ENCODE measurements at regions of chr4 and their contacts with region 1.

Region 1: DNA sequence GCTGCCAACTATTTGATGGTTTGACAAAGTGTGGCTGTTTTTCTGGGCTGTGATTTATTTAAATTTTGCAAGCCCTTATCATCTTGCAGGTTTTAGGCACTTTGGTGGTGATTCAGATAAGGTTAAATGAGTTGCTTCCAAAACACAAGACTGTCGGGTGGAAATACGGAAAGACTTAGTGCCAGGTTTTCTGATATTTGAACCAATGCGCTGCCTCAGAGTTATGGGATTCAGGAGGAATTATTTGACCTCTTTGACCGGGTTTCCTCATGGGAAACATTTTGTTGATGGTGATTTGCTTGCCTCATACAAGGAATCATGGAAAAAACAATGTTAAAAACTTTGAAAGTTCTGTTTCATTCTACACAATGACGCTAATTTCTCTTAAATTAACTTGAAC is 136.1 kb upstream of the MAP9 start:
- DNase-seq: no peak
- ATAC-seq: peak; percentile 87 to 93
- H3K4me3 ChIP-seq: no peak overlapping the region
- H3K27ac ChIP-seq: no peak overlapping the region
- H3K4me1 ChIP-seq: peaks cover 3% of the 10 kb centered on the region
- H3K27me3 ChIP-seq: no peaks in the 10 kb centered on the region

Region 2: GRCh38 chr4:155566354-155566753 is 53.5 kb after region 1 on chr4:
- intact Hi-C with region 1: no loop called
- DNase-seq: no peak
- ATAC-seq: no peak
- H3K4me3 ChIP-seq: no peak overlapping the region
- H3K27ac ChIP-seq: no peak overlapping the region
- H3K4me1 ChIP-seq: no peaks in the 10 kb centered on the region
- H3K27me3 ChIP-seq: no peaks in the 10 kb centered on the region

Region 3: DNA sequence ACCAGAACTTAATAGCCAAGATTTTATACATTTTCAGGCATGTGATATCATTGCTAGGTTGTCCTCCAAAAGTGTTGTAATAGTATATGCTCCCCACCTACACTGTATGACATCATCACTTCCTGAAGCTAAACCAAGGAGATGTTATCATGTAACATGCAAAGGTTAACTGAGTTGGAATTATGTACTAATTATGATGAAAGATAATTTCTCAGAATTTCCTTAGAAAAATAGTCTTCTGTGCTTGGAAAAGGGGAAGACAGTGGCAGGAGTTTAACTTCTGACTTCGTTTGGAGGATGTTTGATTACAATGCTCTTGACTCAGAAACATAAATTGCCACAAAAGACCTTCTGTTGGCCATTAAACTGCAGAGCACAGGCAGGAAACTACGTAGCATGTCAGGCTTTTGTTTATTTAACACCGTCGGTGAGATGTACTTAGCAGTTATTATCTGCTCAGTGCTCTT is 70.2 kb after region 1 on chr4:
- intact Hi-C with region 1: loop called in 1 of 4 experiments (anchors 10 kb)
- DNase-seq: no peak
- ATAC-seq: peak in 1 of 2 donors; percentile 59
- H3K4me3 ChIP-seq: no peak overlapping the region
- H3K27ac ChIP-seq: no peak overlapping the region
- H3K4me1 ChIP-seq: peaks cover 4% of the 10 kb centered on the region
- H3K27me3 ChIP-seq: no peaks in the 10 kb centered on the region

Measured in right cardiac atrium (tissue), 5 donors.